ENCODE measurements at regions of chr16 and their contacts with region 1.

Region 1: DNA sequence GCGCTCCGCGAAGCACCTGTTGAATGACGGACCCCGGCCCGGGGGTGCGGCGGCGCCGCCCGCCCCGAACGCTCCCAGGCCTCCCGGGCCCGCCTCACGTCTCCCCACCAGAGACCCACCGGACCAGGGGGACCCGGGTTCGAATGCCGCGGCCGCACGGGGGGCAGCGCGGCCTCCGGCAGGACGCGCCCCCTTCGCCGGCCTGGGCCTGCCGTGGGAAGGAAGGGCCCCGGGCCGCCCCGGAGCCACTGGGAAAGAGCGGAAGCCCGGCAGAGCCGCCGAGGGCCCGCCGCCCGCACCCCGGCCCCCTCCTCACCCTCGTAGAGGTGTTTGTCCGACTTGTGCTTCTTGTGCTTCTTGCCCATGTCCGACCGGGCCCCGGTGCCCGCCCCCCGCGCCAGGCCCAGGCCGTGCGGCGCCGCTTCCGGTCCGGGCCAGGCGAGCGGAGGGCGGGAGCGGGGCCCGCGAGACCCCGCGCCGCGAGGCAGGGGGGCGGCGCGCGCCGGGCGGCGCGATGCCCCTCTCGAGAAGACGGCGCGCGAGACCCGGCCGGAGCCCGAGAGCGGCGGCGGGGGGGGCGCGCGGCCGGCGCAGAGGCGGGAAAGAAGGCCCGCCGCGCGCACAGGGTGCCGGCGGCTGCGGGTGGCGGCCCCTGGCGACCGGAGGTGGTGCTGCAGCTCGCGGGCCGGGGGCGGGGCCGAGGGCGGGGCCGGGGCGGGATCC is at the start of gene BRD7:
- DNase-seq: peak; percentile 58 to 77 (median 66)
- H3K4me3 ChIP-seq: peak within 1 kb of the TSS; percentile 57 to 59
- H3K4me3 Mint-ChIP-seq: peak within 1 kb of the TSS; percentile 89 to 96 (median 92)
- H3K27ac ChIP-seq: peak within 1 kb of the TSS; percentile 70
- H3K27ac Mint-ChIP-seq: peak within 1 kb of the TSS; percentile 83 to 99 (median 96)
- H3K4me1 ChIP-seq: peaks cover 53% of the 10 kb centered on the region
- H3K4me1 Mint-ChIP-seq: peaks cover 38 to 58% (median 46%) of the 10 kb centered on the region in 4 donors
- H3K27me3 ChIP-seq: no peaks in the 10 kb centered on the region
- H3K27me3 Mint-ChIP-seq: peaks cover 0 to 1% of the 10 kb centered on the region in 2 donors
- total RNA-seq, gene BRD7: 86.6 to 97.7 TPM

Region 2: GRCh38 chr16:50024684-50025536 is 343.7 kb before region 1 on chr16 and contains the start of gene CNEP1R1:
- CTCF ChIA-PET with region 1: interaction called, 6 read pairs
- POLR2A ChIA-PET with region 1: no interaction called
- intact Hi-C with region 1: loop called (anchors 1 kb)
- DNase-seq: peak; percentile 93 to 97 (median 95)
- H3K4me3 ChIP-seq: peak within 1 kb of the TSS; percentile 76 to 85
- H3K4me3 Mint-ChIP-seq: peak within 1 kb of the TSS; percentile 94 to 99 (median 96)
- H3K27ac ChIP-seq: peak within 1 kb of the TSS; percentile 75
- H3K27ac Mint-ChIP-seq: peak within 1 kb of the TSS; percentile 91 to 99 (median 96)
- H3K4me1 ChIP-seq: peaks cover 34% of the 10 kb centered on the region
- H3K4me1 Mint-ChIP-seq: peaks cover 18 to 32% (median 24%) of the 10 kb centered on the region in 4 donors
- H3K27me3 ChIP-seq: no peaks in the 10 kb centered on the region
- H3K27me3 Mint-ChIP-seq: peaks cover 0 to 4% of the 10 kb centered on the region in 2 donors
- total RNA-seq, gene CNEP1R1: 34.2 to 40.8 TPM

Region 3: GRCh38 chr16:50152807-50153452 is 215.6 kb before region 1 on chr16 and contains the start of gene TENT4B:
- CTCF ChIA-PET with region 1: no interaction called
- POLR2A ChIA-PET with region 1: no interaction called
- intact Hi-C with region 1: loop called (anchors 5 kb)
- DNase-seq: peak; percentile 92 to 95 (median 94)
- H3K4me3 ChIP-seq: peak within 1 kb of the TSS; percentile 84 to 93
- H3K4me3 Mint-ChIP-seq: peak within 1 kb of the TSS; percentile 91 to 97 (median 94)
- H3K27ac ChIP-seq: peak within 1 kb of the TSS; percentile 89
- H3K27ac Mint-ChIP-seq: peak within 1 kb of the TSS; percentile 93 to 99 (median 97)
- H3K4me1 ChIP-seq: peaks cover 47% of the 10 kb centered on the region
- H3K4me1 Mint-ChIP-seq: peaks cover 25 to 41% (median 34%) of the 10 kb centered on the region in 4 donors
- H3K27me3 ChIP-seq: no peaks in the 10 kb centered on the region
- H3K27me3 Mint-ChIP-seq: no peaks in the 10 kb centered on the region
- total RNA-seq, gene TENT4B: 22.4 to 23.5 TPM

Region 4: DNA sequence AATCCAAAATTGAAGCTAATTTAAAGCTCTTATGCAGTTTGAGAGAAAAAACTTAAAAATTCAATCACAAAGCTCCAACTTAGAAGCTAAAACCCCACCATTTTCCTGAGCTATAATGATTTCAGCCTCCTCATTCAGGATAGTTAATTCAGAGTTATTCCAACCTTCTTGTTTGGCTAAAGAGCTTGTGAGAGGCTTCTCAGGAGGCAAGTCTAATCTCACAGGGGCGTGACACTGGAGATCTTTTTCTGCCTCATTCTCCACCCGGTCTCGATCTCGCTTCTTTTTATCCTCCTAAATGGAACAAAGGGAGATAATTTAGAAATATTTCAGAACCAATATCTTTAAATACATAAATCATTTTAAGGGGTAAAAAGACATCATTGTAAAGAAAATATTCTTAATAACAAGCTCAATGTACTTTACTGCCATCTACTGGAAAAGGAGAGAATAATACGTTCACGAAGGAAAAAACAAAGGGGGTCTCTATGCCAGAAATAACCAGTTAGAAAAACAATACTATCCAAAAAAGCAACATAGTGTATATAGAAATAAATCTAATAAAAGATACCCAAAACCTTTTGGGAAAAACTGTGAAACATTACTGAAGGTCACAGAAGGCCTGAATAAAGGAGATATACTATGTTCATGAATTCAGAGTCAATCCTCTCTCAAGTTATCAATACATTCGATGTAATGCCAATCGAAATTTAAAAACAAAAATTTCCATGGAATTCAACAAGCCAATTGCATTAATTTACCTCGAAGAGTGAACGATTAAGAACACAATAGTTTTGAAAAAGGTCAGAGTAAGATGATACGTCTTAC is 13.7 kb before region 1 on chr16:
- CTCF ChIA-PET with region 1: interaction called, 30 read pairs
- POLR2A ChIA-PET with region 1: interaction called, 7 read pairs
- intact Hi-C with region 1: no loop called
- DNase-seq: peak in 4 of 5 donors; percentile 42 to 61 (median 54)
- H3K4me3 ChIP-seq: no peak overlapping the region
- H3K4me3 Mint-ChIP-seq: no peak overlapping the region
- H3K27ac ChIP-seq: no peak overlapping the region
- H3K27ac Mint-ChIP-seq: peak overlapping the region in 6 of 7 donors; percentile 0 to 89 (median 41)
- H3K4me1 ChIP-seq: peaks cover 3% of the 10 kb centered on the region
- H3K4me1 Mint-ChIP-seq: peaks cover 10 to 36% (median 23%) of the 10 kb centered on the region in 4 donors
- H3K27me3 ChIP-seq: no peaks in the 10 kb centered on the region
- H3K27me3 Mint-ChIP-seq: no peaks in the 10 kb centered on the region

Region 5: GRCh38 chr16:50627419-50627818 is 258.8 kb after region 1 on chr16:
- CTCF ChIA-PET with region 1: interaction called, 3 read pairs
- POLR2A ChIA-PET with region 1: interaction called, 3 read pairs
- intact Hi-C with region 1: loop called (anchors 2 kb)
- DNase-seq: peak; percentile 32 to 48 (median 36)
- H3K4me3 ChIP-seq: no peak overlapping the region
- H3K4me3 Mint-ChIP-seq: peak overlapping the region in 7 of 8 donors; percentile 64 to 90 (median 78)
- H3K27ac ChIP-seq: no peak overlapping the region
- H3K27ac Mint-ChIP-seq: peak overlapping the region in 6 of 7 donors; percentile 64 to 87 (median 80)
- H3K4me1 ChIP-seq: peaks cover 25% of the 10 kb centered on the region
- H3K4me1 Mint-ChIP-seq: peaks cover 23 to 39% (median 31%) of the 10 kb centered on the region in 4 donors
- H3K27me3 ChIP-seq: no peaks in the 10 kb centered on the region
- H3K27me3 Mint-ChIP-seq: no peaks in the 10 kb centered on the region